Caco-2 (cell line): ENCODE measurements at regions of chr15 and their contacts with region 1.

Region 1: GRCh38 chr15:100721770-100722550 is 119.6 kb downstream of the ASB7 start:
- DNase-seq: peak; percentile 79 to 81
- H3K4me3 ChIP-seq: no peak overlapping the region
- H3K4me3 Mint-ChIP-seq: peak overlapping the region; percentile 62
- H3K27ac Mint-ChIP-seq: peak overlapping the region; percentile 98
- H3K4me1 ChIP-seq: peaks cover 56% of the 10 kb centered on the region
- H3K4me1 Mint-ChIP-seq: peaks cover 30% of the 10 kb centered on the region
- H3K27me3 ChIP-seq: no peaks in the 10 kb centered on the region
- H3K27me3 Mint-ChIP-seq: no peaks in the 10 kb centered on the region
- CTCF ChIP-seq: no peak

Region 2: GRCh38 chr15:100671858-100672543 is 50.0 kb before region 1 on chr15:
- CTCF ChIA-PET with region 1: no interaction called
- POLR2A ChIA-PET with region 1: no interaction called
- intact Hi-C with region 1: loop called (anchors 5 kb)
- DNase-seq: peak; percentile 52 to 66
- H3K4me3 ChIP-seq: no peak overlapping the region
- H3K4me3 Mint-ChIP-seq: peak overlapping the region; percentile 51
- H3K27ac Mint-ChIP-seq: no peak overlapping the region
- H3K4me1 ChIP-seq: 0 out of 2 replicates have a peak, but pooled peaks cover 4% of the 10 kb centered on the region
- H3K4me1 Mint-ChIP-seq: peaks cover 9% of the 10 kb centered on the region
- H3K27me3 ChIP-seq: no peaks in the 10 kb centered on the region
- H3K27me3 Mint-ChIP-seq: no peaks in the 10 kb centered on the region
- CTCF ChIP-seq: peak; percentile 59

Region 3: GRCh38 chr15:100733101-100733788 is 11.3 kb after region 1 on chr15:
- CTCF ChIA-PET with region 1: no interaction called
- POLR2A ChIA-PET with region 1: no interaction called
- intact Hi-C with region 1: loop called (anchors 1 kb)
- DNase-seq: peak; percentile 41 to 75
- H3K4me3 ChIP-seq: no peak overlapping the region
- H3K4me3 Mint-ChIP-seq: no peak overlapping the region
- H3K27ac Mint-ChIP-seq: peak overlapping the region; percentile 94
- H3K4me1 ChIP-seq: peaks cover 23% of the 10 kb centered on the region
- H3K4me1 Mint-ChIP-seq: peaks cover 32% of the 10 kb centered on the region
- H3K27me3 ChIP-seq: no peaks in the 10 kb centered on the region
- H3K27me3 Mint-ChIP-seq: no peaks in the 10 kb centered on the region
- CTCF ChIP-seq: no peak

Region 4: DNA sequence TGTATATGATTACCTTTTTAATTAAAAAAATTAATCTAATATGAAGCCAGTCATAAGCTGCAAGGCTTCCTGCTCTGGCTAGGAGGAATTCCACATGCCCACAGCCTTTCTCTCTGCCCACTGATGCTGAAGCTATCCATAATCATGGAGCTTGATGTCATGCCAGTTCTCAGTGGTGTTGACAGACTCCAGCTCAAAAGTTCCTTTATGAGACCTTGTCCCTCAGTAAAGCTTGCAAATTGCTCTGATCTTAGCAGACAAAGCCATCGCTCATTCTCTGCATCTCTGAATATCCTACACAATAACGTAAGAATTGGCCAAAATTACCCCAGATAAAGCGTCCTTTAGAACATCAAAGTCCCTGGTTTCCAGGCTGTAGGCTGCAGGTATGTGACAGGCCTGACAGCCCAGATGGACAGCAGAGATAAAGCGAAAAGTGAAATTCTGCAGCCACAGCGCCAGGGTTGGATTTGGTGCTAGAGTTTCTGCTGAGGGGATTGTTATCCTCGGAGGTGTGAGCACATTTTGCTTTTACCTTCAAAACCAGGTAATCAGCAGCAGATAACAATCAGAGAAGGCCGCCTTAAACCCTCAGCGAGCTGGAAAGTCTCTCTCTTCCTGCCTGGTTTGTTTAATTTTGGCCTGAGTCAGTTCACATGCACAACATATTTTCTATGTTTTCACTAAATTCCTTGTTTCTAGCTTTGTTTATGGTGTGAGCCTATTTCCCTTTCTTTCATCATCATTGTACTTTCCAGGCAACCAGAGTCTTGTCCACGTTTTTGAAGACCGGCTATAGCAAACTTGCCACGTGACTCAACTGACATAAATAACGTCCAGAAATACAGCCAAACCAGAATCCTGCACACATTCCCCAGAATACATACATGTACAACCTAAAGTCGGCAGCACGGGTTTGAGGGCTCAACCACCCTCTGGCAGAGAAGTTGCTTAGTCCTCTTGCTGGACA is 121.1 kb after region 1 on chr15:
- CTCF ChIA-PET with region 1: interaction called, 7 read pairs
- POLR2A ChIA-PET with region 1: no interaction called
- intact Hi-C with region 1: loop called (anchors 5 kb)
- DNase-seq: peak; percentile 53 to 65
- H3K4me3 ChIP-seq: no peak overlapping the region
- H3K4me3 Mint-ChIP-seq: no peak overlapping the region
- H3K27ac Mint-ChIP-seq: peak overlapping the region; percentile 36
- H3K4me1 ChIP-seq: peaks cover 14% of the 10 kb centered on the region; the same call in 1 of the 2 replicates
- H3K4me1 Mint-ChIP-seq: no peaks in the 10 kb centered on the region
- H3K27me3 ChIP-seq: no peaks in the 10 kb centered on the region
- H3K27me3 Mint-ChIP-seq: no peaks in the 10 kb centered on the region
- CTCF ChIP-seq: no peak